Left cardiac atrium (tissue), 4 donors: ENCODE measurements at regions of chr3 and their contacts with region 1.

Region 1: GRCh38 chr3:197186887-197187588 is 111.4 kb downstream of the DLG1 start:
- DNase-seq: no peak
- ATAC-seq: peak; percentile 57 to 59

Region 2: GRCh38 chr3:196677353-196677752 is 509.7 kb before region 1 on chr3:
- intact Hi-C with region 1: no loop called
- DNase-seq: no peak
- ATAC-seq: no peak

Region 3: DNA sequence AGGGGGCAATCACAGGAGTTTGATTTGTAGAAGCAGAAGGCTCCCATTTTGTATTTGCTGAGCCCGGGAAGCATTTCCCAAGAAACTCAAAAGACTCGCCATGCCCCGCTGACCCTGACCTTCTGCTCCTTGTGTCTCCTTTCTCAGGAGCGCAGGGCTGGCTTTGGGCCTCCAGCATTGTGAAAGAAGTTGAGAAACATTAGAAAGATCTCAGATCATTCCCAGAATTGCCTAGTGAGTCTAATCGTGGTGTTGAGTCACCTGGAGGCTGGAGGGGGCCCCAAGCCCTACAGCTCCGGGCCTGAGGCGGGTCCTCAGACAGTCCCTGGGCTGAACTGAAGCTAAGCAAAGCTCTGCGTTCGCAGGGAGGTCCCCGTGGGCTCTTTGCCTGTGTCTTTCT is 207.5 kb before region 1 on chr3:
- intact Hi-C with region 1: loop called in 1 of 2 experiments (anchors 2 kb)
- DNase-seq: no peak
- ATAC-seq: peak; percentile 46 to 69

Region 4: DNA sequence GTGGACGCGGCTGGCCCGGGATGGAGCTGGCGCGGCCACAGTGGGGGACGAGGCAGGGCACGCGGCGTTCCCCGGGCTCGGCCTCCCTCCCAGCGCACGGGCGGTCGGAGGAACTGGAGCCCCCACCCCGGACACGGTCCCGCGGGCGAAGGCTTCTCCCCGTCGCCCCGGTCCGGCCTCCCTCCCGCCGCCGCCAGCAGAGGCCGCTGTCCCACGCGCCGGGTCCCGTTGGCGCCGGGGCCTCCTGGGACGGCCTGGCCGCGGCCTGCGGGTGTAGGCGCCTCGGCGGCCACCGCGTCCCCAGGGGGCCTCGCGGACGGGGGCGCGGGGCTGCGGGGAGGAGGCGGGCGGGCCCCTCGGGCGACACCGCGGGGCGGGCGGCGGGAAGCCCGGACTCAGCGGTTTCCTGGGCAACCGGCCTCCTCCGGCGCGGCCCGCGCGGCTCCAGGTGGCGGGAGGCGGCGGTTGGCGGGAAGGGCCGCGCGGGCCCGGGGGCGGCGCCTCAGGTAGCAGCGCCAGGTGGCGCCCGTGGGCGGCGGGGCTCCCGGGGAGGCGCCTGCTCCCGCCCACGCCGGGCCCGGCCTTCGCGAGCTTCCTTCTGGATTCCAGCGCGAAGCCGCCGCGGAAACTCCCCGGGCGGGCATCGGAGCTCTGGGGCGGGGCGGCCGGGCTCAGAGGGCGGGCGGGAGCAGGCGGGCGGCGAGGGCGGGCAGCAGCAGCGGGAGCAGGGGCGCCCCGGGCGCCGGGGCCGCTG is 184.2 kb before region 1 on chr3:
- intact Hi-C with region 1: loop called (anchors 5 to 10 kb)
- DNase-seq: peak; percentile 84
- ATAC-seq: peak; percentile 83 to 89